AG04449 (cell line): ENCODE measurements at regions of chr2 and their contacts with region 1.

Region 1: DNA sequence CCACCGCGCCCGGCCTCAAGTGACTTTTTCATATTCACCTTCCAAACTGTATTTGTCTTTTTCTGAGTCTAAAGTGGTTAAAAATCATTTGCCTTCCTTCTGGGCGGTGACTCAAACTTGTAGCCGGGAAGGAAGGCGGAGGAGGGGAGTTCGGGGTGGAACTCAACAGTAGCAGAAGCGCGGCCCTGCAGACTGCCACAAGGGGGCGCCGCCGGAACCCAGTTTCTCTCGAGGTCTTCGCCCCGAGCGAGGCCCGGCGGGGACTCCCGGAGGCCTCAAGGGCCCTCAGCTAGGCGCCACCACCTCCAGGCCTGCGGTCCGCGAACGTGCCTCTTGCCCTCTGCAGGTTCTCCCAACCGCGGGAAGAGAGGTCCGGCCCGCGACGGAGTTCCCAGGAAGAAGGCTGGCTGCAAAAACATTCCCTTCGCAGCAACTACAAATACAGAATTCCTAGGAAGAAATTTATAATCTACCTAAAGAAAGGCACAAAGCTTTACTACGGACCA is 16.8 kb upstream of the ITM2C start:
- DNase-seq: peak; percentile 9
- H3K4me3 ChIP-seq: no peak overlapping the region
- CTCF ChIP-seq: peak; percentile 95

Region 2: GRCh38 chr2:230589497-230590015 is 258.4 kb before region 1 on chr2:
- CTCF ChIA-PET with region 1: no interaction called
- POLR2A ChIA-PET with region 1: no interaction called
- DNase-seq: no peak
- H3K4me3 ChIP-seq: no peak overlapping the region
- CTCF ChIP-seq: no peak

Region 3: DNA sequence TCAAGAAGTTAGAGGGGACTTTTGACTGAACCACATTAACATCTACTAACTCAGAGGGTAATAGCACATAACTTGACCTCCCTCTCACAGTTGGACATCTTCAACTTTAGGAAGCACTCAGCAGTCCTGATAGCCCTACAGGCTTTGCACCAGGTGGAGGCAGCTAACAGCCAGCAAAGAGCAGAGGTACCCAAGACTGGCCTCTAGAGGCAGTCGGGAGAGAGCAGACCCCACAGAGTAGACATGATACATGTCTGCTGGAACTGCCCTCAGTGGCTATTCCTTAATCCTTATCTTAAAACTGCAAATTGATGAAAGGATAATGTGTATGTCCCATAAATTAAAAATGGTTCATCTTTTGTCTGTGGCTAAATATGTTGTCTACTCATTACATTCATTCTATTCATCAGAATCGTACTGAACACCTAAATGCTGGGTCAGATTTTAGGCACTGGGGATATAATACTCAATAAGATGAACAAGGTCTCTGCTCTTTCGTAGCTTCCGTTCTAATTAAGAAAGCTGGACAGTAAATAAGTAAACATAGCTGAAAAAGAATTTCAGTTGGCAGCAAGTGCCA is 85.5 kb before region 1 on chr2:
- CTCF ChIA-PET with region 1: no interaction called
- POLR2A ChIA-PET with region 1: no interaction called
- DNase-seq: no peak
- H3K4me3 ChIP-seq: no peak overlapping the region
- CTCF ChIP-seq: peak; percentile 46

Region 4: GRCh38 chr2:230830428-230830827 is 17.5 kb before region 1 on chr2:
- CTCF ChIA-PET with region 1: interaction called, 79 read pairs
- POLR2A ChIA-PET with region 1: no interaction called
- DNase-seq: no peak
- H3K4me3 ChIP-seq: no peak overlapping the region
- CTCF ChIP-seq: no peak

Region 5: DNA sequence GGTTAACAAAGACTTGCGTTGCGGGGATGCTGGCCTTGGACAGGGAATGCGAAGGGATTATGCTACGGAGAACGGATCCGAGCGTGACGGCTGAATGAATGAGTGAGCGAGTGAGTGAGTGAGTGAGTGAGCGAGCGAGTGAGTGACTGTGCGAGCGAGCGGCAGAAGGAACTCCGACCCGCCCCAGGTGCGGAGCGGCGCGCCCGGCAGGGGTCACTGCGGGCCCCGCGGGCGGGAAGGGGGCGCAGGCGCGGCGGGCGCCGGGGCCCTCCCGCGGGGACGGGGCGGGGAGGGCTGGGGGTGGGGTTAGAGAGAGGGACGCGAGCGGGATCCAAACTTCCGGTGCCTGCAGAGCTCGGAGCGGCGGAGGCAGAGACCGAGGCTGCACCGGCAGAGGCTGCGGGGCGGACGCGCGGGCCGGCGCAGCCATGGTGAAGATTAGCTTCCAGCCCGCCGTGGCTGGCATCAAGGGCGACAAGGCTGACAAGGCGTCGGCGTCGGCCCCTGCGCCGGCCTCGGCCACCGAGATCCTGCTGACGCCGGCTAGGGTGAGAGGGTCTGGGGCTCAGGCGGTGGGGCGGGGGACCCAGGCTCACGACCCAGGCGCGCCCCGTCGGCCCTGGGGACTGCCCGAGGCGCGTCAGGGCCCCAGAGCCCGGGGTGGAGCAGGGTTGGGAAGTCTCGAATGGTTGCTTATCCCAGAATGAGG is 16.8 kb after region 1 on chr2 and contains the start of gene ITM2C:
- CTCF ChIA-PET with region 1: interaction called, 38 read pairs
- POLR2A ChIA-PET with region 1: no interaction called
- DNase-seq: no peak
- H3K4me3 ChIP-seq: peak within 1 kb of the TSS; percentile 85
- CTCF ChIP-seq: peak; percentile 57

Region 6: GRCh38 chr2:230877732-230878598 is 30.0 kb after region 1 on chr2:
- CTCF ChIA-PET with region 1: interaction called, 14 read pairs
- POLR2A ChIA-PET with region 1: no interaction called
- DNase-seq: no peak
- H3K4me3 ChIP-seq: no peak overlapping the region
- CTCF ChIP-seq: no peak

Region 7: DNA sequence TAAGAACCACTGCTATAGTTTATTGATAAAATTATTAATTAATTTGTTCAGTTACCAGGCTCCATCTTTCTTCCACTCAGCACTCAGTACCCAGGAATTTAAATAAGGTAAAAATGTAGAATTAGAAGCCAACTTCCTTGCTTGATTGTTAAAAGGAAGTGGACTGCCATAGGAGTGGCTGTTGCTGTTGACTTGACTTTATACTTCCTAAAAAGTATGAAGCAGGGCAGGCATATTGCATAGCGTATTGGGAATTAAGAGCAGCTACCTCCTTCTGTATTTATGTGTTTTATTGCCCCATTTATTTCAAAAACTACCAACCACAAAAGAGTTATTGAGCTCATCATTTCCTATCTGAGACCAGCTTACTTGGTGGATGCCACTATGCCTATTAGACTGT is 236.6 kb after region 1 on chr2:
- CTCF ChIA-PET with region 1: no interaction called
- POLR2A ChIA-PET with region 1: no interaction called
- DNase-seq: no peak
- H3K4me3 ChIP-seq: no peak overlapping the region
- CTCF ChIP-seq: no peak